ENCODE measurements at regions of chr3 and their contacts with region 1.

Region 1: GRCh38 chr3:9396700-9397521 is 504 bp upstream of the SETD5 start:
- DNase-seq: peak; percentile 99
- H3K4me3 ChIP-seq: peak overlapping the region; percentile 75
- CTCF ChIP-seq: no peak

Region 2: GRCh38 chr3:9362731-9363530 is 34.0 kb before region 1 on chr3 and contains the start of gene THUMPD3:
- CTCF ChIA-PET with region 1: interaction called, 3 read pairs
- POLR2A ChIA-PET with region 1: interaction called, 29 read pairs
- DNase-seq: peak; percentile 53
- H3K4me3 ChIP-seq: peak within 1 kb of the TSS; percentile 76
- CTCF ChIP-seq: no peak

Region 3: DNA sequence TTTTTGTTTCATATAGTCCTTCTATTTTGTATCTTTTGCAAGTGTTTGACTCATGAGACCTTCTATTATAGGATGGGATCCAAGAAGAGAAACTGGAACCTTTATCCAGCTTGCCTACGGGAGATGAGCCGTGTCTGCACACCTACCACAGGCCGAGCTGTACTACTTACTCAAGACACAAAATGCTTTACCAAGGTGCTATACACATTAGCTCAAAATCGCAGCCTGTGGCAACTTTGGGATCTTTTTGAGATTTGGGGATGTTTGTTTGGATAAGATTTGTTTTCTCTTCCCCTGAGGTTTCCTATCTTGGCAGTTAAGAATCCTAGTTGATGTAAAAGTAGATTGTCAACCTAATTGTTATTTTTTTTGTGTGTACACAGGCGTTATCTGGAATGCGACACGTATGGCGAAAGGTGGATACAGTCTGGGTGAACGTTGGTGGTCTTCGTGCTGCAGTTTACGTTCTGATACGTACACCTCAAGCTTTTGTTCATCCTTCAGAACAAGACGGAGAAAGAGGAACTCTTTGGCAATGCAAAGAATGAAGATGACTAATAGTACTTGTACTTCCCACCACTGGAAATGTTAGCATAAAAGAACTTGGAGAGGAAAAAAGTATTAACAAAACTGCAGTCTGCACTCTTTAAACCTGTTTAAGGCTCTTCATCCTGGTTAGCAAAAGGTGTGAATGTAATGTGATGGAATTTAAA is 12.6 kb before region 1 on chr3:
- CTCF ChIA-PET with region 1: interaction called, 9 read pairs
- POLR2A ChIA-PET with region 1: interaction called, 24 read pairs
- DNase-seq: no peak
- H3K4me3 ChIP-seq: no peak overlapping the region
- CTCF ChIP-seq: no peak

Region 4: GRCh38 chr3:9416139-9416780 is 19.3 kb after region 1 on chr3:
- CTCF ChIA-PET with region 1: interaction called, 7 read pairs
- POLR2A ChIA-PET with region 1: interaction called, 17 read pairs
- DNase-seq: no peak
- H3K4me3 ChIP-seq: no peak overlapping the region
- CTCF ChIP-seq: no peak

Region 5: DNA sequence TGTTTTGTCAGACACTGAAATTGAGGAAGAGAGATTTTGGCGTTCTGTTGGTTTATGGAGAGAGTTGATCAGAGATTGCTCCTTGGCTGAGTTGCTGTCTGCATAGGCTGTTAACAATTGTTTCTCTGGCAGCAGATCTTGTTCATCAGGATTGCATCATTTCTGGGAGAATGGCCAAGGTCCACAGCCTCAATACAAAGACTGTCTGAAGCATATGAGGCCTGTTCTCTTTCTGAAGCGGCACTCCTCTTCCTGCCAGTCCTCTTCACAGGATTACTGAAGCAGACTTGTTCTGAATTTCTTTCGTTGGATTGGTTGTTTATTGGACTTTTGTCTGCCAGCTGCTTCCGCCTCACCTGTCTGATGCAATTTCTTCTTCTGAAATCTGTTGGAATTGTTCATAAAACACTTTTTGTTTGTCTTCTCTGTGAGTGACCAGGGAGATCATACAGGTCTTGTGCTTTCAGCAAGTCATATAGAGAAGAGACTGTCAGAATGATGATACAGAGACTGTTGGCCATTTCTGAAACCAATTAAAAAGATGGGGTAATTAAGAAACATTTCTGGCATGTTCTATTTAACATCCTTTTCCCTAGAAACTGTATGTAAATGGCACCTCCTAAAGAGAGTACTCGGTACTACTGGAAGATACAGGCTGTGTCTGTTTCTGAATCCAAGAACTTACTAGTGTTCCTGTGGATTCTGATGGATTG is 26.0 kb after region 1 on chr3:
- CTCF ChIA-PET with region 1: interaction called, 7 read pairs
- POLR2A ChIA-PET with region 1: interaction called, 17 read pairs
- DNase-seq: peak; percentile 85
- H3K4me3 ChIP-seq: no peak overlapping the region
- CTCF ChIP-seq: peak; percentile 43

Region 6: GRCh38 chr3:9525078-9525477 is 128.2 kb after region 1 on chr3:
- CTCF ChIA-PET with region 1: no interaction called
- POLR2A ChIA-PET with region 1: no interaction called
- DNase-seq: no peak
- H3K4me3 ChIP-seq: no peak overlapping the region
- CTCF ChIP-seq: no peak